Heart left ventricle (tissue), 16 donors: ENCODE measurements at regions of chr2 and their contacts with region 1.

Region 1: DNA sequence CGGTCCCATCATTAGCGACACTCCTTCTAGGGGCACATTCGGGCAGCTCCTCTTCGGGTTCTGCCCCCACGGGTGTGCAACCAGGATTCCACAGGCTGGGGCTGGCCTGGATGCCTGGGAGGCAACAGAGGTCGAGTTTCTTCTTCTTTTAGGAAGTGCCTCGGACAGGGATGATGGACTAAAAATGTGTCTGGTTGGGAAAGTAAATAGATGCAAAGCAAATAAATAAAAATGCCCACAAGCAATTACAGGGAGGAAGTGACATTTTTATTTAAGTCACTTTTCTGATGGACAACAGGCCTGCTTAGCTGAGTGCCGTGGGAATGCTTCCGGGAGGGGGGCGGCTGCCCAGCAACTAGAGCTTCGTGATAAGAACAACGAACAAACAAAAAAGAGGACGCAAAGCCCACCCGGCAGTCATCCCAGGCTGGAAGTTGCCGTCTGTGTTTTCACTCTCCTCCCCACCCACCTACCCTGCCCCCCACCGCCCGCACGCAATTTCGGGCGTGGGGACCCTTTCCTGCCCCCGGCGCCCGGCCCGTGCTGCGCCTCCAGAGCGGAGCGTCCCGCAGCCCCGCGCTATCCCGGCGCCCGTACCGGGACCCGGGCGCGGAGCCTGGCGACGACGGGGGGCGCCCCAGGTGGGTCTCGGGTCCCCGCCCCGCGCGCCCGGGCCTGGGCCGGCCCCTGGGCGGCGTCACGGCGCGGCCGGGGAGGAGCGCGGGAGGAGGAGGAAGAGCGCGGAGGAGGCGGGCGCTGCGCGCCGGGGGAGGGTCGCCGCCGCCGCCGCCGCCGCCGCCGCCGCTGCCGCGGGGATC is 412 bp upstream of the NCK2 start:
- DNase-seq: peak; percentile 72 to 88 (median 77)
- ATAC-seq: peak; percentile 60 to 94 (median 90)
- H3K4me3 ChIP-seq: peak overlapping the region; percentile 38 to 95 (median 72)
- H3K27ac ChIP-seq: peak overlapping the region; percentile 83 to 95 (median 93)
- H3K4me1 ChIP-seq: peaks cover 6 to 56% (median 37%) of the 10 kb centered on the region in 12 donors
- H3K27me3 ChIP-seq: no peaks in the 10 kb centered on the region
- CTCF ChIP-seq: no peak
- POLR2A ChIP-seq: no peak

Region 2: DNA sequence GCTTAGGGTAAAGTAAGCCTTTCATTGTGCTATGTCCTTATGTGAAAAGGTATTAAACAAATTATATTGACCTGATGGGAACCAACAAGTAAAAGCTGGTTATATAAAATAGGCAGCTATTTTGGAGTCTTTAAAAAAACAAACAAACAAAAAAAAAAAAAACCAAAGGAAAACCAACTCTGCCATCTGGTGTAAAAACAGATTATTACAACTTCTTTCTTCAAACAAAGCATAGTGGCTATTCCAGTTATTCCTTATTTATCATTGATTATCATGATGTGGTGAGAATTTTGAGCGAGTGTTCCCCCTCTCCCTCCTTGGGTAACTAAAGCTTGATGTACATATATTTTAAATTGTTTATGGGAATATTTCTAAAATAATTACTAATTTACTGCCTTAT is 223.1 kb before region 1 on chr2:
- intact Hi-C with region 1: no loop called
- DNase-seq: no peak
- ATAC-seq: no peak
- H3K4me3 ChIP-seq: no peak overlapping the region
- H3K27ac ChIP-seq: peak overlapping the region in 6 of 12 donors; percentile 28 to 89 (median 42)
- H3K4me1 ChIP-seq: peaks cover 0 to 39% (median 19%) of the 10 kb centered on the region in 12 donors
- H3K27me3 ChIP-seq: no peaks in the 10 kb centered on the region
- CTCF ChIP-seq: peak; percentile 44 to 74 (median 64)
- POLR2A ChIP-seq: no peak

Region 3: GRCh38 chr2:105576440-105577252 is 167.7 kb before region 1 on chr2:
- intact Hi-C with region 1: loop called in 8 of 10 experiments (anchors 2 to 10 kb)
- DNase-seq: peak in 2 of 5 donors; percentile 34 to 44
- ATAC-seq: peak; percentile 38 to 71 (median 59)
- H3K4me3 ChIP-seq: peak overlapping the region in 1 of 12 donors; percentile 20
- H3K27ac ChIP-seq: peak overlapping the region in 6 of 12 donors; percentile 2 to 60 (median 31)
- H3K4me1 ChIP-seq: peaks cover 0 to 26% (median 7%) of the 10 kb centered on the region in 12 donors
- H3K27me3 ChIP-seq: no peaks in the 10 kb centered on the region
- CTCF ChIP-seq: peak; percentile 43 to 75 (median 64)
- POLR2A ChIP-seq: no peak

Region 4: GRCh38 chr2:105789745-105790460 is 45.6 kb after region 1 on chr2:
- intact Hi-C with region 1: loop called in 1 of 10 experiments (anchors 5 kb)
- DNase-seq: peak in 4 of 5 donors; percentile 47 to 66 (median 63)
- ATAC-seq: peak; percentile 80 to 91 (median 88)
- H3K4me3 ChIP-seq: peak overlapping the region in 5 of 12 donors; percentile 16 to 31 (median 28)
- H3K27ac ChIP-seq: peak overlapping the region in 8 of 12 donors; percentile 18 to 63 (median 48)
- H3K4me1 ChIP-seq: peaks cover 9 to 90% (median 51%) of the 10 kb centered on the region in 12 donors
- H3K27me3 ChIP-seq: no peaks in the 10 kb centered on the region
- CTCF ChIP-seq: peak in 3 of 12 donors; percentile 22 to 32 (median 29)
- POLR2A ChIP-seq: no peak

Region 5: DNA sequence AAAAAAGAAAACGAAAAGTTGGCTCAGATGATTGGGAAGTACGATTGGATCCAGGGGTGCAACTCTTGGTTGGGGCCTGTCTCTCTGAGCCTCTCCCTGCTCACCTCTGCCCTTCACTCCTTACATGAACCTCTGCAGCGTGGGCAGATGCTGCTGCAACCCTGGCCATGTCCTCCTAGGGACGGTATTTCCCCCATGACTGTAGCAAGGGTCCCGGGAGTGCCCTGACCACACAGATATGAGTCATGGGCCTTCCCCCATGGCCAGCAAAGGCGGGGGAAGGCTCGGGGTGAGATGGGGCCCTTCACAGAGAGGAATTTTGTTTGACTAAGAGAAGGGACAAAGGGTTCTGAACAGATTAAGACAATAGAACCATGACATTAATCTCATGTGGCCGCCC is 129.4 kb after region 1 on chr2:
- intact Hi-C with region 1: loop called in 1 of 10 experiments (anchors 10 kb)
- DNase-seq: peak in 1 of 5 donors; percentile 47
- ATAC-seq: peak in 3 of 4 donors; percentile 11 to 55 (median 50)
- H3K4me3 ChIP-seq: no peak overlapping the region
- H3K27ac ChIP-seq: no peak overlapping the region
- H3K4me1 ChIP-seq: peaks cover 0 to 56% (median 18%) of the 10 kb centered on the region in 12 donors
- H3K27me3 ChIP-seq: no peaks in the 10 kb centered on the region
- CTCF ChIP-seq: no peak
- POLR2A ChIP-seq: no peak

Region 6: GRCh38 chr2:105888625-105889400 is 144.5 kb after region 1 on chr2:
- intact Hi-C with region 1: loop called in 4 of 10 experiments (anchors 5 to 10 kb)
- DNase-seq: peak in 2 of 5 donors; percentile 38 to 40
- ATAC-seq: peak; percentile 13 to 38 (median 29)
- H3K4me3 ChIP-seq: no peak overlapping the region
- H3K27ac ChIP-seq: peak overlapping the region in 3 of 12 donors; percentile 1 to 20 (median 14)
- H3K4me1 ChIP-seq: peaks cover 5 to 72% (median 38%) of the 10 kb centered on the region in 12 donors
- H3K27me3 ChIP-seq: no peaks in the 10 kb centered on the region
- CTCF ChIP-seq: peak in 2 of 12 donors; percentile 11 to 20
- POLR2A ChIP-seq: no peak

Region 7: DNA sequence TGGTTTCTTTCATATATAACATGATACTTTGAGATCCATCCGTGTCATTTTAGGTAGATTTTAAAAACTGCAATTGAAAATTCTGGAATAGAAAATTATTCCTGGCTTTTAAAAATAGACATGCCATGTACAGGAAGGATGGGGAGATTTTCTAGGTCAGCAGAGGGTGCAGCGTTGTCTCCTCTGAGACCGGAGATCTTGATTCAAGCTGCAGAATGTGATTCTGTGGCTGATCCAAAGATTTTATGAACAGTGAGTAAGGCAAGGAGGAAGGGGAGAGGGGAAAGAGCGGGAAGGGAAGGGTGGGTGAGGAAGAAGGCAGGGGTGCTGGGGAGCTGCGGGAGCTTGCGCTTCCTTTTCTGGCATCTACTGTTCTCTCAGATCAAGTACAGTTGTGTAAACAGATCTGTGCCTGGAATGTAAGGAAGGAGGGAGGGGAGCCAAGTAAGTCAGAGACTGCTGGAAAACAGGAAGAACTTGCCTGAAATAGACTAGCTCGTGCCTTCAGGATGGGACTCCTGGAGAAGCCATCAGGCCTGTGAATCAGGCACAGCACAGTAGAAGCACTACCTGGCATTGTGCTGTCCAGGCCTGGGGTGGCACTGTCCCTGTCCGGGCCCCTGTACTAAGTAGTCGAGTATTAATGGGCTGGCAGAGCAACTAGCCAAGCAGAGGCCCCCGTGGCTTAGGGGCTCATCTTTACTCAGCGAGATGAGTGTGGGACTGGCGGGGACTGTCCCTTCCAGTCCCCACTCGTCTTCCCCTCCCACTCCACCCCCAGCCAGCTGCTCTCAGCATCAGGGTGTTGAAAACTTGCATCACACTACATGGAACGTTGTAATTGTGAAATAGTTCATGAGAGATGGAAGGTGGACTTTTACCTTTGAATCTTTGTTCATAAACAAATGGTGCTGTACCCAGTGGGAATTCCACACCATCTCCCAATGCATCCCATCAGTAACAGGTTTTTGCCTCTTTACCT is 286.3 kb after region 1 on chr2:
- intact Hi-C with region 1: loop called in 2 of 10 experiments (anchors 5 to 10 kb)
- DNase-seq: peak; percentile 53 to 77 (median 63)
- ATAC-seq: peak; percentile 78 to 90 (median 88)
- H3K4me3 ChIP-seq: no peak overlapping the region
- H3K27ac ChIP-seq: peak overlapping the region; percentile 62 to 93 (median 81)
- H3K4me1 ChIP-seq: peaks cover 5 to 53% (median 30%) of the 10 kb centered on the region in 12 donors
- H3K27me3 ChIP-seq: no peaks in the 10 kb centered on the region
- CTCF ChIP-seq: no peak
- POLR2A ChIP-seq: no peak

Region 8: DNA sequence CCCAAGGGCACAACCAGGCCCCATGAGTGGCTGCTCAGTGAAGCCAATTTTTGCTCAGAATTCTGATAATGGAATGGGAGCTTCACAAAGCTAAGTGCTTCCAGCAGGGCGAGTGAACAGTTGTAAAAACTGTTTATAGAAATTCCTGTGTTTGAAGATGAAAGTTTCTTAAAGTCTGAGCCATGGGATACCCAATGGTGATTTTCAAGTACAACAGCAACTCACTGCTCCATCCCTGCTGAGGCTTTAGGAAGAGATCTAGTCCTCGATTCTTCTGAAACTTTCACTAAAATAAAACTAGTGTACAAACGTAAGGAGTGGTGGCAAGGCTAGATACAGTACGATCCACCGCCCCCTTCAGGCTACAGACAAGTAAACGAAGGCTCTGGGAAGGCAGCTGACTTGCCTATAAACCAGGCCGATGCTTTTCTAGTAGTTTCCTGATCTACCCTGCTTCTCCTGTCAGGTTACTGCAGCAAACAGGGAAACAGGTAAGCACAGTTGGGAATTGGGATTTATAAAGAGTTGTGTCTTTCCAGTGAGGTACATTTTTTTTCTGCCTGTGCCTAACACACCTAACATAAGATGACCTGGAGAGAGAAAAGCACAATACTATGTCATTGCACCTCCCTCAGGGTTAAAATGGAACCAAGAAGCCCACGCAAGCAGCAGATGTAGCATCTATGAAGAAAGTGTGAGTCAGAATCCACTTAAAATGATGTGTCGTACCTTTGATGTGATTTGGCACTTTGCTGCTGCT is 341.1 kb after region 1 on chr2:
- intact Hi-C with region 1: loop called in 2 of 10 experiments (anchors 10 kb)
- DNase-seq: peak in 3 of 5 donors; percentile 48 to 55 (median 51)
- ATAC-seq: peak in 3 of 4 donors; percentile 61 to 84 (median 72)
- H3K4me3 ChIP-seq: no peak overlapping the region
- H3K27ac ChIP-seq: peak overlapping the region in 1 of 12 donors; percentile 7
- H3K4me1 ChIP-seq: peaks cover 0 to 7% (median 0%) of the 10 kb centered on the region in 12 donors
- H3K27me3 ChIP-seq: no peaks in the 10 kb centered on the region
- CTCF ChIP-seq: peak; percentile 19 to 67 (median 47)
- POLR2A ChIP-seq: no peak

Region 9: DNA sequence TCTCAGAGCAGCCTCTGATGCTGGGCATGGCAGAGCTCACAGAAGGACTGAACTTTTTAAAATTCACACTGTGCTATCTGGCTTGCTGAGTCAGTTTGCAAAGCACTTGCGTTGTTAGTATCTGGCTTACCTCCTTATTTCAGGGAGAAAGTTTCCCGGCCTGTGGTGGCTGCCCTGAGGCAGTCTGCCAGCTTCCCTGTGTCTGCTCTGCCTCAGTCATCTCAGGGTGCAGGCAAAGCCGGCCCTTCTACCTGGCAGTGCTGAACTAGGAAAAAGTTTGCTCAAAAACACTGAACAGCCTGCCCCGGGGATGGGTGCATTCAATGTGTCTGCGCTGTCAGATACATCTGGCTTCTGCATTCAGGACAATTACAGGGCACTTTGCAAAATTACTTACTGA is 540.0 kb after region 1 on chr2:
- intact Hi-C with region 1: no loop called
- DNase-seq: peak in 1 of 5 donors; percentile 46
- ATAC-seq: peak in 2 of 4 donors; percentile 45 to 56
- H3K4me3 ChIP-seq: no peak overlapping the region
- H3K27ac ChIP-seq: no peak overlapping the region
- H3K4me1 ChIP-seq: no peaks in the 10 kb centered on the region
- H3K27me3 ChIP-seq: no peaks in the 10 kb centered on the region
- CTCF ChIP-seq: no peak
- POLR2A ChIP-seq: no peak